Ovary (tissue), 10 donors: ENCODE measurements at regions of chr1 and their contacts with region 1.

Region 1: GRCh38 chr1:162391790-162392563 is 10.4 kb downstream of the C1orf226 start:
- DNase-seq: no peak
- H3K4me3 ChIP-seq: no peak overlapping the region
- H3K27ac ChIP-seq: no peak overlapping the region
- H3K4me1 ChIP-seq: peaks cover 6% of the 10 kb centered on the region
- H3K27me3 ChIP-seq: no peaks in the 10 kb centered on the region
- CTCF ChIP-seq: peak in 2 of 3 donors; percentile 28 to 61
- EP300 ChIP-seq: no peak
- POLR2A ChIP-seq: no peak

Region 2: GRCh38 chr1:161792740-161793139 is 599.2 kb before region 1 on chr1:
- intact Hi-C with region 1: loop called in 2 of 4 experiments (anchors 10 kb)
- DNase-seq: no peak
- H3K4me3 ChIP-seq: no peak overlapping the region
- H3K27ac ChIP-seq: no peak overlapping the region
- H3K4me1 ChIP-seq: no peaks in the 10 kb centered on the region
- H3K27me3 ChIP-seq: no peaks in the 10 kb centered on the region
- CTCF ChIP-seq: peak in 2 of 3 donors; percentile 17 to 46
- EP300 ChIP-seq: no peak
- POLR2A ChIP-seq: no peak

Region 3: GRCh38 chr1:162056043-162056442 is 335.9 kb before region 1 on chr1:
- intact Hi-C with region 1: loop called in 2 of 4 experiments (anchors 5 kb)
- DNase-seq: peak; percentile 14 to 66 (median 37)
- H3K4me3 ChIP-seq: no peak overlapping the region
- H3K27ac ChIP-seq: no peak overlapping the region
- H3K4me1 ChIP-seq: no peaks in the 10 kb centered on the region
- H3K27me3 ChIP-seq: no peaks in the 10 kb centered on the region
- CTCF ChIP-seq: peak in 2 of 3 donors; percentile 28 to 36
- EP300 ChIP-seq: no peak
- POLR2A ChIP-seq: no peak

Region 4: DNA sequence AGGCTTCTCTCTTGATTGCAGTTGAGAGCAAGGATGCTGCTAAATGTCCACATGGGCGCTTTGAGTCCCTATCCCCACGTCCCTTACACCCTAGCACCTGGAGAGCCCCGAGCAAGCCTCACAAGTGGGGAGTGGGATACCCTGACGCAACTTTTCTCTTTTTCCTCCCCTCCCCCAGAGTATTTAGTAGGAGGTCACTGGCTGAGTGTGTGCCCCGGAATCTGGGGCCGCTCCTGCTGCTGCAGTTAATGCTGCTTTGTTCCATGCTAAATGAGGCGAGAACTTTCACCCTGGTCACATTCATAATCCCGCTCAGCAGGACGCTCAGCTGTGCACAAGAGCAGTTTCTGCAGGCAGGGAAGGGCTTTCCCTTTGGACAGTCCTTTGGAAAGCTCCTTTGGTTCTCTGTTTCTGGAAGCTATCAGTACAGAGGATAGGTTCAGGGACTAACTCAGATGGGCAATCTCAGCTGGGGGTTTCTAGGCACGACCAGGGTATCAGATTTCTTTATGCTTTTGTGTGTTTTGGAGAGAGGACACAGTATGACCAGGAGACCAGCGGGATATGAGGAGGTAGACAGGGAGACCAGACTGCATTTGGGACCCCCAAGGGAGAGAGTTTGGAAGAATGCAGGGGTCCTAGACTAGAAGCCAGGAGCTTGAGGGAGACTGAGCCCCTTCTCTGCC is 246.6 kb before region 1 on chr1:
- intact Hi-C with region 1: no loop called
- DNase-seq: no peak
- H3K4me3 ChIP-seq: no peak overlapping the region
- H3K27ac ChIP-seq: no peak overlapping the region
- H3K4me1 ChIP-seq: no peaks in the 10 kb centered on the region
- H3K27me3 ChIP-seq: no peaks in the 10 kb centered on the region
- CTCF ChIP-seq: no peak
- EP300 ChIP-seq: no peak
- POLR2A ChIP-seq: no peak

Region 5: GRCh38 chr1:162404550-162405160 is 12.7 kb after region 1 on chr1:
- intact Hi-C with region 1: loop called in 1 of 4 experiments (anchors 2 kb)
- DNase-seq: no peak
- H3K4me3 ChIP-seq: no peak overlapping the region
- H3K27ac ChIP-seq: no peak overlapping the region
- H3K4me1 ChIP-seq: no peaks in the 10 kb centered on the region
- H3K27me3 ChIP-seq: no peaks in the 10 kb centered on the region
- CTCF ChIP-seq: no peak
- EP300 ChIP-seq: no peak
- POLR2A ChIP-seq: no peak